ENCODE measurements at regions of chr4 and their contacts with region 1.

Region 1: GRCh38 chr4:87353592-87353991 is 30.9 kb upstream of the HSD17B13 start:
- DNase-seq: peak in 13 of 14 experiments; percentile 4 to 63 (median 32)
- ATAC-seq: peak; percentile 74
- H3K4me3 ChIP-seq: no peak overlapping the region
- H3K4me3 Mint-ChIP-seq: no peak overlapping the region
- H3K27ac ChIP-seq: no peak overlapping the region
- H3K27ac Mint-ChIP-seq: no peak overlapping the region
- H3K4me1 ChIP-seq: no peaks in the 10 kb centered on the region
- H3K4me1 Mint-ChIP-seq: peaks cover 6% of the 10 kb centered on the region
- H3K27me3 ChIP-seq: no peaks in the 10 kb centered on the region
- H3K27me3 Mint-ChIP-seq: no peaks in the 10 kb centered on the region
- CTCF ChIP-seq: peak; percentile 81

Region 2: DNA sequence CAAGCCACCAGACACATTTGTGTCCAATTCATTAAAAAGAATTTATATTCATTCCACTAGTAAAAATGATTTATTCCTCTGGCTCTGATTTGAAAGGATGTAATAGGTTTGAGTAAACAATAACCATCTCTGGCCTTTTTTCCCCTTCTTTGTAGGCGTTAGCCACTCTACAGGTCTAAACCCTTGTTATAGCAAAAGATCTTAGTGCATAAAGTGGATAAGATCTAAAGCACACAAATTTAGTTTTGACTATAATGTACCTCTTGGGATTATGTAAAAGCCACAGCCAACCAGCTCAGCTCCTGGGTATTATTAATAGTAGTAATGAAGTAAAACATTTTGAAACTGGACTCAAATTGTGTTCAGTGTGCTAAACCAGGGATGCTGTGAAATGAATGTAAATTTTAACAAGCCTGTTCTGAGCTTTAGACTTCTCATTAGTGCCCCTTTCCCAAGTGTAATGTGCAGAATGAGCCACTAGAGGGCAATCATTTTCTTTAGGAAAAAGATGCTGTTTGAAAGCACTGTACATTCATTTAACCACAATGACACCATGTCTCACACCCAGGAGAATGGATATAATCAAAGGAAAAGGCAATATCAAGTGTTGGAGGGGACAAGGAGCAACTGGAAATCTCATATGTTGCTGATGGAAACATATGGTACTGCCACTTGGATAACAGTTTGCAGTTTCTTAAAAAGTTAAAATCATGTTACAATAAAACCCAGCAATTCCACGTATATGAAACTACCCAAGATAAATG is 202.9 kb before region 1 on chr4:
- CTCF ChIA-PET with region 1: no interaction called
- POLR2A ChIA-PET with region 1: no interaction called
- intact Hi-C with region 1: loop called in 1 of 2 experiments (anchors 10 kb)
- DNase-seq: peak in 10 of 14 experiments; percentile 14 to 79 (median 42)
- ATAC-seq: peak; percentile 84
- H3K4me3 ChIP-seq: no peak overlapping the region
- H3K4me3 Mint-ChIP-seq: no peak overlapping the region
- H3K27ac ChIP-seq: no peak overlapping the region
- H3K27ac Mint-ChIP-seq: no peak overlapping the region
- H3K4me1 ChIP-seq: no peaks in the 10 kb centered on the region
- H3K4me1 Mint-ChIP-seq: no peaks in the 10 kb centered on the region
- H3K27me3 ChIP-seq: no peaks in the 10 kb centered on the region
- H3K27me3 Mint-ChIP-seq: no peaks in the 10 kb centered on the region
- CTCF ChIP-seq: peak; percentile 97

Region 3: DNA sequence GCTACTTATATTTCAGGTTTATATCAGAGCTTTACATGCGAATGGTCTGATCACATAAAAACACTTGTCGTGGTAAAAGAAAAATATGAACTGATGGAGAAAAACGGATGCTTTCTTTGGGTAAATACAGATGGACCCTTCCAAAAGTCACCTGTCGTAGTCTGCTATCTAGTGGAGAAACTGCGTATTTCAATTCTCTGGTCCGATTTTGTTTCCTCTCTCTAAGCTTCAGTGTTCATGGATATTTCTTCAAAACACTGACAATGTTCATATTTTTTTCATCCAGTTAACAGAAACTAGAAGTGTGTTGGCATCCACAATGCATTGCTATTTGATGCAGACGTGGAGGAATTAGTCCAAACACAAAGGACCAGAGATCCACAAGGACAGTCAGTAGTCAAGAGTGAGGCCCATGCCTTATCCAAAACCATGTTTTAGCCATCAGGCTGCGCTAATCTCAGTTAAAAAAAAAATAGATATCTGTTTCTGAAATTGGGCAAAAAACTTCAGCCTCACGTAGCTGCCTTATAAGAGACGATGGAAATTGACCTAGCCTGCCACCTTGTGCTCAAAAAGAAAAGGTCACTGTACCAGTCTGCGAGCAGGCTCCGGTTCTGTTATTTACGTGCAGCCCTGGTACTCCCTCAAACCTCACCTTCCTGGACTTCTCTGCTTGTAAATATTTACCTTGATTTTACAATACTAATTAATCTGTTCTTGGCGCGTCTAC is 495.2 kb after region 1 on chr4:
- CTCF ChIA-PET with region 1: no interaction called
- POLR2A ChIA-PET with region 1: no interaction called
- intact Hi-C with region 1: loop called (anchors 5 kb)
- DNase-seq: peak in 7 of 14 experiments; percentile 2 to 62 (median 27)
- ATAC-seq: peak; percentile 75
- H3K4me3 ChIP-seq: peak overlapping the region; percentile 24
- H3K4me3 Mint-ChIP-seq: peak overlapping the region; percentile 17
- H3K27ac ChIP-seq: no peak overlapping the region
- H3K27ac Mint-ChIP-seq: no peak overlapping the region
- H3K4me1 ChIP-seq: no peaks in the 10 kb centered on the region
- H3K4me1 Mint-ChIP-seq: peaks cover 18% of the 10 kb centered on the region
- H3K27me3 ChIP-seq: peaks cover 0 to 11% of the 10 kb centered on the region in 2 experiments
- H3K27me3 Mint-ChIP-seq: peaks cover 15% of the 10 kb centered on the region
- CTCF ChIP-seq: peak; percentile 66